K562 (cell line): ENCODE measurements at regions of chr16 and their contacts with region 1.

Region 1: GRCh38 chr16:56400458-56400857 is 24.9 kb downstream of the AMFR start:
- DNase-seq: no peak
- ATAC-seq: no peak
- H3K4me3 ChIP-seq: no peak overlapping the region
- H3K27ac ChIP-seq: no peak overlapping the region
- H3K4me1 ChIP-seq: no peaks in the 10 kb centered on the region
- H3K27me3 ChIP-seq: no peaks in the 10 kb centered on the region
- CTCF ChIP-seq: no peak
- EP300 ChIP-seq: no peak
- POLR2A ChIP-seq: no peak
- RAD21 ChIP-seq: no peak

Region 2: GRCh38 chr16:56382901-56383355 is 17.5 kb before region 1 on chr16:
- CTCF ChIA-PET with region 1: no interaction called
- POLR2A ChIA-PET with region 1: interaction called, 13 read pairs
- in situ Hi-C with region 1: no loop called
- intact Hi-C with region 1: no loop called
- DNase-seq: no peak
- ATAC-seq: no peak
- H3K4me3 ChIP-seq: no peak overlapping the region
- H3K27ac ChIP-seq: no peak overlapping the region
- H3K4me1 ChIP-seq: no peaks in the 10 kb centered on the region
- H3K27me3 ChIP-seq: no peaks in the 10 kb centered on the region
- CTCF ChIP-seq: no peak
- EP300 ChIP-seq: no peak
- POLR2A ChIP-seq: no peak
- RAD21 ChIP-seq: no peak

Region 3: DNA sequence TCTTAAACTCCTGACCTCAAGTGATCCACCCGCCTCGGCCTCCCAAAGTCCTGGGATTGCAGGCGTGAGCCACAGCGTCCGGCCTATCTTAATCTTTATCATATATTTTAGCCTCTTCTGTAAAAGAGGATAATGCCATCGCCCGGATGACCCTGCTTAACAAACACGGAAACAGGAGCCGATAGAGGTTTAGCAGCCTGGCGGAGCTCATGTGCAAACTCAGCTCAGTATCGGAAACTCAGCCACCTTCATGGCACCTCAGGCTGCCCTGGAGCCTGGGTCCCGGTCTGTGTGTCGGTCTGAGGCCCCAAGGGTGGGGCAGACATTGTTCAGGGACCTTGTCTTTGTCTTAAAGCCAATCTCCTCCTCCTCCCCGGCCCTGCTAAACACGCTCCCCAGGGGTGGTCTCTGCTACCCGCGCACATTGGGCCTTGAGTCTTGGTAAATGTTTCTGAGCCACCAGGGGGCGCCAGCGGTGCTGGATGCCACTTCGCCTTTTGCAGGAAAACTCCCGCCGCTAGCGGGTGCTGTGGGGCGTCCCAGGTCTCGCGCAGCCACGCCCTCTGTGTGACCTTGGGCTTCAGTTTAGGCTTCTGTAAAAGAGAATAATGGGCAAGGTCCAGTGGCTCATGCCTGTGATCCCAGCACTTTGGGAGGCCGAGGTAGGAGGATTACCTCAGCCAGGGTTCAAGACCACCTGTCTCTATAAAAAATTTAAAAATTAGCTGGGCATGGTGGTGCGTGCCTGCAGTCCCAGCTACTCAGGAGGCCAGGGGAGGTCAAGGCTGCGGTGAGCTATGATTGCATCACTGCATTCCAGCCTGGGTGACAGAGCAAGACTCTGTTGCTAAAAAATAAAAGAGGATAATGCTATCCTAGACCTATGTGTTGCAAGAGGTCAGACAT is 564.0 kb after region 1 on chr16:
- CTCF ChIA-PET with region 1: no interaction called
- POLR2A ChIA-PET with region 1: no interaction called
- in situ Hi-C with region 1: no loop called
- intact Hi-C with region 1: no loop called
- DNase-seq: peak; percentile 85 to 94 (median 86)
- ATAC-seq: peak; percentile 90
- H3K4me3 ChIP-seq: no peak overlapping the region
- H3K27ac ChIP-seq: peak overlapping the region; percentile 53; the same call in 1 of the 3 replicates
- H3K4me1 ChIP-seq: peaks cover 4 to 22% of the 10 kb centered on the region in 2 experiments; a peak in 4 of 5 replicates
- H3K27me3 ChIP-seq: peaks cover under 1 to 6% of the 10 kb centered on the region in 2 experiments; a peak in 4 of 5 replicates
- CTCF ChIP-seq: peak; percentile 99 to 100 (median 99)
- EP300 ChIP-seq: no peak
- POLR2A ChIP-seq: no peak
- RAD21 ChIP-seq: peak; percentile 68 to 91